Activated naive CD4-positive, alpha-beta T cell treated with anti-CD3 and anti-CD28 coated beads for 36 hours (primary cell): ENCODE measurements at regions of chr11 and their contacts with region 1.

Region 1: GRCh38 chr11:123478352-123478987 is 48.4 kb downstream of the GRAMD1B start:
- DNase-seq: peak; percentile 43
- H3K4me3 Mint-ChIP-seq: no peak overlapping the region
- H3K27ac Mint-ChIP-seq: no peak overlapping the region
- H3K4me1 Mint-ChIP-seq: peaks cover 26% of the 10 kb centered on the region
- H3K27me3 Mint-ChIP-seq: no peaks in the 10 kb centered on the region

Region 2: DNA sequence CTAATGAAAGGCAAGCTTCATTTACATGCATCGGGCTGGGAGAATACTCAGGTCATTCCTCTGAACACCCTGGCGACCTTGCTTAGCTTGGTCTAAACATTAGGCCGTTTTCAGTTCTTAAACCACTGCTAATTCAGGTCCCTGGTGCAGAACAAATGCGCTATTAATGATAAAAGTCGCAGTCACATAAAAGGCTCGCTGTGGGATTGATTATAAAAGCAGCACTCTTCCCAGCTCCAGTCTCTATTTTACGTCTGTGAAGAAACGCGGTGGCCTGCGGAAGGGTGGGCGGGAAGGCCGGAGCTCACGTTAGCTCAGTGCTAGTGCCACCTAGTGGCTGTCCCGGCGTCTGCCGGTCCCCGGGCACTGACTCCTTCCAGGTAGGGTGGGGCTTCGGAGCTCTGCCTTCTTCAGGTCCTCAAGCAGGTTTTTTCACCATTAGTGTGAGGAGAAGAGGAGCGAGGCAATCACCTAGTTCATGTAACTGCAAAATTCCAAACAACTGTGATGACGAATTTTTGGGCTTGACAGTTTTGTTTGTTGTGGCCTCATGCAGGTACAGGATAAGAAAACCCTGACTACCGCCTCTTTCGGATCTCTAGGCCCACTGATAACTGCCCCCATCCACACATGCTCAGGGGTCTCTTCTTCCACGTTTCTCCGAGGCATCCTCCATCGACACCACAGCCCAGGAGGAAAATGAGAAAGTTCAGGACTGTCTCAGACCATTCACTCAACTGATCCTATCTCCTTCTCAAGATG is 216.9 kb before region 1 on chr11:
- CTCF ChIA-PET with region 1: interaction called, 12 read pairs
- intact Hi-C with region 1: loop called (anchors 1 kb)
- DNase-seq: peak; percentile 83
- H3K4me3 Mint-ChIP-seq: no peak overlapping the region
- H3K27ac Mint-ChIP-seq: no peak overlapping the region
- H3K4me1 Mint-ChIP-seq: peaks cover 7% of the 10 kb centered on the region
- H3K27me3 Mint-ChIP-seq: peaks cover 23% of the 10 kb centered on the region

Region 3: DNA sequence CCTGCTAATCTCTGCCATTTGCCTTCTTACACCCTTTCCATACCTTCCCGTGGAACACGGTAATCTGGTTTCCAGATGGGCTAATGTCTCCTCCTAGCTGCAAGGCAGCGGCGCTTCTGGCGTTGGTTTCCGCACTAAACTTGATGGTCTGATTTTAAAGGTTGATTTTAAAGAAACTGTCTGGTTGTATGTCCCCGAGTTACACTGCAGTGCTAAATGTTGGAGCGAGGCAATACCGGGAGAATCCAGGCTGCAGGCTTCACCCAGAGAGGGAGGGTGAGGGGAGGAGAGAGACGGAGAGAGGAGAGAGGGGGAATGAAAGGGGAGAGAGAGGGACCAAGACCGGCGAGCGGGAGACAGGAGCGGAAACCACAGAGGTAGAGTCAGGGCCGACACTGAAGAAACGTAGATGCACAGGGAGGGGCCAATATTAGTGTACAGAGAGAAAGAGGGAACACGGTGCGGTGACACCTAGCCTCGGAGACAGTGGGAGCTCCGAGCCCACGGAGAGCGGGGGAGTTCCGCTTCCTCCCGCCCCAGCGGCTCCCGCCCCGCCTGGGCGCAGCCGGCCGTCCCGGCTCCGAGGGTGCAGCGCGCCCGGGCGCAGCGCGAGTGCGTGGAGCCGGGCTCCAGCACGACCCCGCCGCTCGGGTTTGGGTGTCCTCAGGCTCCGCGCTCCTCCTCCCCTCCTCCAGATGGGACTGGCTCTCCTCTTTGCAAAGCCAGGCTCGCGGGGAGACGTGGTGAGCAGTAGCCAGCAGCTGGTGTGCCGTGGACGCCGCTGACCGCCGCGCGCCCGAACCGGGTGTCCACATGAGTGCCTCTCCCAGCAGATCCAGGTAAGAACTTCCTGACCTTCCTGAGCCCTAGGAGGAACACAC is 120.3 kb before region 1 on chr11:
- CTCF ChIA-PET with region 1: interaction called, 6 read pairs
- intact Hi-C with region 1: loop called (anchors 1 kb)
- DNase-seq: peak; percentile 71
- H3K4me3 Mint-ChIP-seq: peak overlapping the region; percentile 87
- H3K27ac Mint-ChIP-seq: peak overlapping the region; percentile 77
- H3K4me1 Mint-ChIP-seq: peaks cover 42% of the 10 kb centered on the region
- H3K27me3 Mint-ChIP-seq: peaks cover 40% of the 10 kb centered on the region

Region 4: DNA sequence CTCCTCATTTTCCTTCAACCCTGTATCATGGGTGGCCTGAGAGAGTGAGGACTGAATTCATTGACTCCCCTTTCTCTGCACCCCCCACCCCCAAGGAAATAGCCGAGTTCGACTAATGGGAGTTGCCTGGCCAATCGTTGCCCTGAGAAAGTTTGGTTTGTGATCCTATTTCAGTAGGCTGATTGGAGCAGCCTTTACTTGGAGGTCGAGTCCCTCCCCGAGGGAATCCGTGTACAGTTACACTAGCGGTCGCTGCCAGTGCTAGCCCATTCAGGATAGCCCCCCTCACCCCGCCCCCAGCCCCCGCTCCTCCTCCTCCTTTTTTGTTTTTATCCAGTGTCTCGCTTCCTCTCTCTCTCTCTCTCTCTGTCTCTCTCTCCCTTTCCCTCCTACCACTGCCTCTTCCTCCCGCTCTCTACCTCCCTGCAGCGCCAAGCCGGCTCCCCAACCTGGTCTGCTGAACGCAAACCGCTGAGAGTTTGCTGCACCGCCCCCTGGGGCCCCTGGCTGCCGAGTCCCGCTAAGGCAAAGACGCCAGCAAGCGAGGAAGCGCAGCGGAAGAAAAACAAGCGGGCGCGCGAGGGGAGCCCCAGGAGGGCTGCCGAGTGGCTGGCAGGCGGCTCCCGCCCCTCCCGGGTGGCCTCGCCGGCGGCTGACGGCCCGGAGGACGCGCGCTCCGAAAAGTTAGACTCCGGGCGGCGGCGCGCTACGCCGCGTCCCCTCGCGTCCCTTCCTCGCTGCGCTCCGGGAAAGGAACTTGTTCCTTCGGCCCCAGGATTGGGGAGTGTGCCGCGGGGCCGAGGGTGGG is 48.4 kb before region 1 on chr11 and contains the start of gene GRAMD1B:
- CTCF ChIA-PET with region 1: interaction called, 7 read pairs
- intact Hi-C with region 1: loop called (anchors 1 kb)
- DNase-seq: peak; percentile 87
- H3K4me3 Mint-ChIP-seq: peak within 1 kb of the TSS; percentile 92
- H3K27ac Mint-ChIP-seq: peak within 1 kb of the TSS; percentile 85
- H3K4me1 Mint-ChIP-seq: peaks cover 33% of the 10 kb centered on the region
- H3K27me3 Mint-ChIP-seq: peaks cover 2% of the 10 kb centered on the region
- total RNA-seq, gene GRAMD1B: 43.7 to 47.2 TPM

Region 5: DNA sequence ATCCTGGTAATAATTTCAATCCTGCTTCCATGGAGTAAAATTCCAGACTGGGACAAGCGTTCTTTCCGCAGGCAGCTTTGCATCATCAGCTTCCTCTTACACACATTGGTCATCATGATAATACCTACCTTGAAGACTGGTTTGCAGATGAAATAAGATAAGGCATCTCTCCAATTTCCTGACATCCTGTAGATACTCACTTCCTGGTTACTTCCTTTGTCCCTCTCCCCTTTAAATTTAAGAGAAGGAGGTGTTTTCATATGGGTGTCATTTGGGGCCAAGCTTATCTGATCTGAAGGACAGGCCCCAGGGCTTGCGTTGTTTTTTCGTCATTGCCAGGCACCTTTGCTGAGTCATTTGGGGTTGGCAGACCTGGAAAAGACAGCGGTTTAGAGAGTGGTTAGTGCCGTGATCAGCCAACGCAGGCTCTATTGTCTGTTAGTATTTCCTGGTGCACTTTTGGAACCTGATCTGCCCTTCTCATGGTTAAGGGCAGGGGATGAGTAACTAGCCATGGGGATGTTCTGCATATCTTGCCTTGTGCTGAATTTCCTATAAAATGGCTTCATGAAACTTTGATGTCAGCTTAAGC is 24.3 kb before region 1 on chr11:
- CTCF ChIA-PET with region 1: interaction called, 4 read pairs
- intact Hi-C with region 1: loop called (anchors 1 kb)
- DNase-seq: peak; percentile 93
- H3K4me3 Mint-ChIP-seq: peak overlapping the region; percentile 72
- H3K27ac Mint-ChIP-seq: peak overlapping the region; percentile 93
- H3K4me1 Mint-ChIP-seq: peaks cover 73% of the 10 kb centered on the region
- H3K27me3 Mint-ChIP-seq: no peaks in the 10 kb centered on the region

Region 6: DNA sequence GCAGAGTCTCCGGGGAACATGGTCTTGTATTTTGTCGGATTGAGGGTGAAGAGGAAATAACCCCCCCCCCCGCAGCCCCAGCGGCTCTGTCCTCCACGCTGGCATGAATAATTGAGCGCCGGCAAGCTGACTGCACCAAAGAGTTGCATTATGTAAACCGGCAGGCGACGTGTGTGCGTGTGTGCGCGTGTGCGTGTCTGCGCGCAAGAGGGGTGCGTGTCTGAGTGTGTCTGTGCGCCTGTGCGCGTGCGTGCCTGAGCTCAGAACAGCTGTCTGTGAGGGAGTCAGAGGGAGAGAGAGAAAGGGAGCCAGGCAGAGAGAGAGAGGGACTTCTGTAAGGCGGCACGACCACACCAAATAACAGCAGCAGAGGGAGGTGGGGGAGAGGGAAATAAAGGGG is 81.5 kb after region 1 on chr11:
- CTCF ChIA-PET with region 1: no interaction called
- intact Hi-C with region 1: loop called (anchors 2 kb)
- DNase-seq: peak; percentile 64
- H3K4me3 Mint-ChIP-seq: peak overlapping the region; percentile 68
- H3K27ac Mint-ChIP-seq: no peak overlapping the region
- H3K4me1 Mint-ChIP-seq: peaks cover 14% of the 10 kb centered on the region
- H3K27me3 Mint-ChIP-seq: peaks cover 3% of the 10 kb centered on the region